ENCODE measurements at regions of chr9 and their contacts with region 1.

Region 1: GRCh38 chr9:33290247-33291030 is at the start of gene NFX1:
- DNase-seq: peak; percentile 99
- H3K4me3 ChIP-seq: peak within 1 kb of the TSS; percentile 57 to 79 (median 78)
- H3K27ac ChIP-seq: peak within 1 kb of the TSS; percentile 92
- H3K4me1 ChIP-seq: peaks cover 13% of the 10 kb centered on the region
- H3K27me3 ChIP-seq: no peaks in the 10 kb centered on the region
- CTCF ChIP-seq: no peak
- POLR2A ChIP-seq: peak; percentile 95
- total RNA-seq, gene NFX1: 21.7 and 22.1 TPM in 2 replicates

Region 2: DNA sequence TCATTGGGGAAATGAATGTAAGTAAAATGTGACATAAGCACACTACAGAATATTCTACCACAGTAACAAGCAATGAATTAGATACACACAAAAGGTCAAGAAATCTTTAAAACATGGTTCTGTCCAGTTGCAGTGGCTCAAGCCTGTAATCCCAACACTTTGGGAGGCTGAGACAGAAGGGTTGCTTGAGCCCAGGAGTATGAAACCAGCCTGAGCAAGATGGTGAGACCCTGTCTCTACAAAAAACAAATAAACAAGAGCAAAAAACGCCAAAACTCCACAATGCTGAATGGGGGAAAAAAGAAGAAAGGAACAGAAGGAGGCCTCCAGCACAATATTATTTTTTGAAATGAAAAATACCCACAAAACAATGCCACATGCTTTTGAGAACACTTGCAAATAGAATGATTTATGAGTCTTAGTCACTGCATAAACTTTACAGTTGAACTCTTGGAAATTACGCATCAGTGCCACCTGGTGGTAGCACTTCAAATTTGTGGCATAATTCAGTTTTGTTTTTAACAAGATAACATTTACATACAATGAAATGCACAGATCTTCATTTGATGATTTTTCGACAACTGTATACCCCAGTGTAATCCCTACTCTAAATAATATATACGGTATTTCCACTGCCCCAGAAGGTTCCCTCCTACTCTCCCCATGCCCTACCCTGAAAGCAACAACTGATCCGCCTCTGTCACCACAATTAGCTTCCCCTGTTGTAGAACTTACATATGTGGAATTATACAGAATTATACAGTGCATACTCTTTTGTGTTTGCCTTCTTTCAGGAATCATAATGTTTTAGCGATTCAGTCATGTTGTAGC is 64.9 kb before region 1 on chr9:
- CTCF ChIA-PET with region 1: no interaction called
- POLR2A ChIA-PET with region 1: no interaction called
- dilution Hi-C with region 1: no loop called
- intact Hi-C with region 1: no loop called
- DNase-seq: peak; percentile 91
- H3K4me3 ChIP-seq: no peak overlapping the region
- H3K27ac ChIP-seq: no peak overlapping the region
- H3K4me1 ChIP-seq: peaks cover 9% of the 10 kb centered on the region
- H3K27me3 ChIP-seq: no peaks in the 10 kb centered on the region
- CTCF ChIP-seq: peak; percentile 41 to 55
- POLR2A ChIP-seq: no peak

Region 3: DNA sequence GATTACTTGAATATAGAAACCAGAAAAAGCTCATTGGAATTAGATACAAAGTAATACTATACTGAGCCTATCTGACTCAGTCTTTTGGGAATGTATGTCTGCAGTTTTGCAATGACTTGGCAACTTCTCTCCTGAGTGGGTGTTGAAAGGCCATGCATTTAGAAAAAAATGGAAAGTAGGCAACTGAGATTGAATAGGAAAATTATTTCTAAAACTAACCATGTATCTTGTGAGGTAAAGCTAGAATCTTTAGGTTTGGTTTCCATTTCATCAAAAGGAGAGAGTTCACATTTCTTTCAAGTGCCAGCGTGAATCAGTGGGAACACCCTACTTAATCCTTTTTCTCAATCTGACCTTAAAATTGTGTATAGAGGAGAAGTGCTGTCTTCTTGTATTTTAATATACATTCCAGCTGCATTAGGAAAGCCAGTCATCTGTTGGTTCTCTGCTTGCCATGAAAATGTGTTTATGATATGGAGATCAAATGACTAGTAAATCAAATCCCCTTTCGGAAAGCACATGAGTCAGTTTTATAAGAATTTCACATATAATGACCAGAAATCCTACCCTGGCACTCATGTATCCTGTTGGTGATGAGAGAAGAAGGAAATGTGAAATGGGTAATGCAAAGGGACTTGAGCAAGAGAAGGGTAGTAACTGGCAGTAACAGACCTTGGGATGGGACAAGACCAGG is 30.3 kb after region 1 on chr9:
- CTCF ChIA-PET with region 1: interaction called, 3 read pairs
- POLR2A ChIA-PET with region 1: interaction called, 13 read pairs
- dilution Hi-C with region 1: no loop called
- intact Hi-C with region 1: loop called (anchors 2 kb)
- DNase-seq: peak; percentile 86
- H3K4me3 ChIP-seq: no peak overlapping the region
- H3K27ac ChIP-seq: peak overlapping the region; percentile 86
- H3K4me1 ChIP-seq: peaks cover 22% of the 10 kb centered on the region
- H3K27me3 ChIP-seq: no peaks in the 10 kb centered on the region
- CTCF ChIP-seq: no peak
- POLR2A ChIP-seq: no peak

Region 4: GRCh38 chr9:33374634-33375213 is 84.3 kb after region 1 on chr9:
- CTCF ChIA-PET with region 1: interaction called, 31 read pairs
- POLR2A ChIA-PET with region 1: no interaction called
- dilution Hi-C with region 1: no loop called
- intact Hi-C with region 1: loop called (anchors 1 kb)
- DNase-seq: peak; percentile 88
- H3K4me3 ChIP-seq: peak overlapping the region in 1 of 3 experiments; percentile 16
- H3K27ac ChIP-seq: no peak overlapping the region
- H3K4me1 ChIP-seq: peaks cover 6% of the 10 kb centered on the region
- H3K27me3 ChIP-seq: no peaks in the 10 kb centered on the region
- CTCF ChIP-seq: peak; percentile 85 to 91
- POLR2A ChIP-seq: no peak

Region 5: DNA sequence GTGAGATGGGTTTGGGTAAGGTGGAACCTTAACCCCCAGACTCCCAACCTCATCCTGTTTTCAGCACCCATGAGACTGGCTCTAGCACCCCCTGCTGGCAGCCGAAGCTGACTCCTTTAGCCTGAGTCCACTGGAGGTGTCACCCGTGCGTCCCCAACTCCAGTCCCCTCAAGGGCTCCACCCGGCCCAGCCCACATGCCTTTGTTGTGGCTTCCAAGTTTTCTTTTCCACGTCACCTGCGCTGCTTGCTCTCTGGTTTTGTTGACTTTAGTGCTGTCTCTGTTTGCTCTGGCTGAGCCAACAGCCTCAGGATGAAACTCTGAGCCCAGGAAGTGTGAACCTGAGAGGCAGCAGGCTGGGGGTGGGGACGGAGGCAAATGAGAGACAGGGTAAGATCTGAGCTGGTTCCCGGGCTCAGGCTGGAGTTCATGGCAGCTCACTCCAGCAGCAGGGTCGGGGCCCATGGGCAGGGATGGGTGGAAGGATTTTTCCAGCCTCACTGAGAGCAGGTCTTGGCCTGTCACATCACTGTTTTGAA is 125.1 kb after region 1 on chr9:
- CTCF ChIA-PET with region 1: interaction called, 63 read pairs
- POLR2A ChIA-PET with region 1: no interaction called
- dilution Hi-C with region 1: no loop called
- intact Hi-C with region 1: loop called (anchors 1 kb)
- DNase-seq: peak; percentile 49
- H3K4me3 ChIP-seq: no peak overlapping the region
- H3K27ac ChIP-seq: no peak overlapping the region
- H3K4me1 ChIP-seq: no peaks in the 10 kb centered on the region
- H3K27me3 ChIP-seq: peaks cover 0 to 3% of the 10 kb centered on the region in 2 experiments
- CTCF ChIP-seq: peak; percentile 83 to 84
- POLR2A ChIP-seq: no peak

Region 6: DNA sequence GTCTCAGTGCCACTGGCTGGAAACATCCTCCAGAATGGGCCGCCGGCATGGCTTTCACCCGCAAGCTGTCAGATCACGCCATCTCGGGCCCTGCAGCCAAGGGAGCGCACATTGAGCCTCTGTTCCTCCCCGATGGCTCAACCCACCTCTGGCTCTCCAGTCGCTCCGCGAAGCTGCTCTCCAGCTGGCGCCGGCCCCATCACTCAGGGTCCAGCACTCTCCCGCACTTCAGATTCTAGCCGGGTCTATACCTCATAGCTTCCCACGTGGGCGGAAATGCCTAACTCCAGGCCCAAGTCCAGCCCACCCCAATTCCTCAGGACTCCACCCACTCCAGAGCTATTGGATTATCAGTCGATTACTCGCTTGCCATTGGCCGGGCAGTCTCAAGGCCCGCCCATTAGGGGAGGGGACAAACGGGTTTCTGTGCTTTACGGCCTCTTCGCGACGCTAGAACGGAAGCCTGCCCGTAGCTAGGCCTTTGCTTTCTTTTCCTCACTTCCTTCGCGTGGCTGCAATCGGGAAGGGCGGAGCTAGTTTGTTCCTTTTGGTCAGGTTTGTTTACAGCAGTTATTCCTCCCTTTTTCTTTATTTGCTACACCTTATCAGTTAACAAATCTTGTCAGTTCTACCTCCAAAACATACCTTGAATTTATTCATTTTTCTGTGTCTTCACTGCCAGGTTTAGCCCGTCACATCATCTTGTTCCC is 183.4 kb after region 1 on chr9 and contains the start of gene NOL6:
- CTCF ChIA-PET with region 1: interaction called, 17 read pairs
- POLR2A ChIA-PET with region 1: interaction called, 5 read pairs
- dilution Hi-C with region 1: no loop called
- intact Hi-C with region 1: no loop called
- DNase-seq: peak; percentile 100
- H3K4me3 ChIP-seq: peak within 1 kb of the TSS; percentile 62 to 96 (median 89)
- H3K27ac ChIP-seq: peak within 1 kb of the TSS; percentile 70
- H3K4me1 ChIP-seq: peaks cover 15% of the 10 kb centered on the region
- H3K27me3 ChIP-seq: no peaks in the 10 kb centered on the region
- CTCF ChIP-seq: no peak
- POLR2A ChIP-seq: peak; percentile 94
- total RNA-seq, gene NOL6: 42.3 and 45.1 TPM in 2 replicates

Region 7: DNA sequence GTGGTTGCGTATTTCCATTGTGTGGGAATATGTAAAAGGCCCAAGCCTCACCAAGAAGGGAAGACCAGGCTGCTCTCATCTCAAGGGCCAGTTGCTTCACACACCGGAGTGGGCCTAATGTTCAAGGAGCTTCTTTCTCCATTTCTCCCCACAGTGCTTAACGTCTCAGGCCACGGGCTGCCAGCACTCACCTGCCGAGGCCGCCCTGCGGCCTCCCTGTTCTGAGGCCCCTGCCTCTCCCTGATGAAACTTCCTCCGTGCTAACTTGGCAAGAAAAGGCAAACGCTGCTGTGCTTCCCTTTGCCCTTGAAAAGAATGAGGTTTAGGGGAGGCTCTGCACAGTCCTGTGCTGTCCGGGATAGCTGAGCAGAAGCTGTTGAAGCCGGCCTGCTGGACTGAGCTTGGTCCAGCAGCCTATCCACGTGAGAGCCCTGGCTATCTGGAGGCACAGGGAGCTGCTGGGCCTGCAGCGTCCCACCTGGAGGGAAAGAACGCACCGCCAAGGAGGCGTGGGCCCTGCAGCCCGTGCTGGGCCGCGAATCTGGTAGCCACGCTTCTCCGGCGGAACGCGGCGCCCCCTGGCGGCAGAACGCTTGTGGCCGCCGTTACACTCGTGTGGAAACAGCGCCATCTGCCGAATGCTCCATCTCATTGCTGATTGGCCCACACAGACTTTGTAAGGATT is 431.4 kb after region 1 on chr9:
- CTCF ChIA-PET with region 1: no interaction called
- POLR2A ChIA-PET with region 1: no interaction called
- dilution Hi-C with region 1: no loop called
- intact Hi-C with region 1: loop called (anchors 5 kb)
- DNase-seq: peak; percentile 84
- H3K4me3 ChIP-seq: no peak overlapping the region
- H3K27ac ChIP-seq: no peak overlapping the region
- H3K4me1 ChIP-seq: peaks cover 13% of the 10 kb centered on the region
- H3K27me3 ChIP-seq: peaks cover 0 to 4% of the 10 kb centered on the region in 2 experiments
- CTCF ChIP-seq: peak; percentile 100
- POLR2A ChIP-seq: no peak

Measured in endothelial cell of umbilical vein (primary cell).